ENCODE measurements at regions of chr1 and their contacts with region 1.

Region 1: GRCh38 chr1:23787701-23788100 is 3.2 kb upstream of the LYPLA2 start:
- DNase-seq: no peak
- ATAC-seq: no peak
- H3K4me3 ChIP-seq: no peak overlapping the region
- H3K27ac ChIP-seq: no peak overlapping the region
- H3K4me1 ChIP-seq: peaks cover 14% of the 10 kb centered on the region
- H3K27me3 ChIP-seq: no peaks in the 10 kb centered on the region
- CTCF ChIP-seq: no peak
- POLR2A ChIP-seq: no peak
- RAD21 ChIP-seq: no peak

Region 2: DNA sequence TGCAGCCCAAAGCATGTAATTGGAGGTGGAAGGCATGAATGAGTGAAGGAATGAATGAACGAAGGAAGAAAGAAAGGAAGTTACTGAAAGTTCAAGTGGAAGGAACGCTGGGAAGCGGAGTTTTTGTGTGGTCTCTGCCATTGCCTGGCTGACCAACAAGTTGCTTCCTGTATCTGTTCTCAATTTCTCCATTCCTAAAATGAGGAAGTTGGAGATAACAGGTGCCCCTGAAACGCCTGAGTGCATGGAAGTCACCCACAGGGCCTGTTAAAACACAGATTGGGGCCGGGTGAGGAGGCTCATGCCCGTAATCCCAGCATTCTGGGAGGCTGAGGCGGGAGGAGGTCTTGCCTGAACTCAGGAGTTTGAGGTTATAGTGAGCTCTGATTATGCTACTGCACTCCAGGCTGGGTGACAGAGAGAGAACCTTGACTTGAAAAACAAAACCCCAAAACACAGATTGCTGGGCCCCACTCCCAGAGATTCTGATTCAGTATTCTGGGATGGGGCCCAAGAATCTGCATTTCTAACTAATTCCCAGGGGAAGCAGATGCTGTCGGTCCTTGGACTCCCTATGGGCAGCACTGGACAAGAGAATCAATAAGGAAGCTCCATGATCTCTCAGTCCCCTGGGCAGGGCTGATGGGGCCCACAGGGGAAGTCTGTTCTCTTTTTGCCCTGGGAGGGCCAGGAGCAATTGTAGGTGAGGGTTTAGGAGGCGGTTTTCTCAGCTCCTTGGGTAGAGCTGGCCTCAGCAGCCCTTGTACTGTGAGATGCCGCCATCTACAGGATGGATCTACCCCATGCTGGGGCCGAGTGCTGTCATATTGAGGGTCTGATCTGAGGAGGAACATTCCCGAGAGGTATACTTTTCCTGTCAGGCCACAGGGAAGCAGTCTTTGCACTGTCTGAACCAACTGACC is 128.8 kb after region 1 on chr1:
- CTCF ChIA-PET with region 1: no interaction called
- POLR2A ChIA-PET with region 1: interaction called, 10 read pairs
- dilution Hi-C with region 1: no loop called
- in situ Hi-C with region 1: no loop called
- intact Hi-C with region 1: no loop called
- DNase-seq: peak; percentile 58
- ATAC-seq: peak; percentile 96
- H3K4me3 ChIP-seq: no peak overlapping the region
- H3K27ac ChIP-seq: no peak overlapping the region
- H3K4me1 ChIP-seq: peaks cover 2% of the 10 kb centered on the region; the same call in 1 of the 2 replicates
- H3K27me3 ChIP-seq: peaks cover 5% of the 10 kb centered on the region
- CTCF ChIP-seq: peak; percentile 67
- POLR2A ChIP-seq: no peak
- RAD21 ChIP-seq: peak; percentile 75

Region 3: DNA sequence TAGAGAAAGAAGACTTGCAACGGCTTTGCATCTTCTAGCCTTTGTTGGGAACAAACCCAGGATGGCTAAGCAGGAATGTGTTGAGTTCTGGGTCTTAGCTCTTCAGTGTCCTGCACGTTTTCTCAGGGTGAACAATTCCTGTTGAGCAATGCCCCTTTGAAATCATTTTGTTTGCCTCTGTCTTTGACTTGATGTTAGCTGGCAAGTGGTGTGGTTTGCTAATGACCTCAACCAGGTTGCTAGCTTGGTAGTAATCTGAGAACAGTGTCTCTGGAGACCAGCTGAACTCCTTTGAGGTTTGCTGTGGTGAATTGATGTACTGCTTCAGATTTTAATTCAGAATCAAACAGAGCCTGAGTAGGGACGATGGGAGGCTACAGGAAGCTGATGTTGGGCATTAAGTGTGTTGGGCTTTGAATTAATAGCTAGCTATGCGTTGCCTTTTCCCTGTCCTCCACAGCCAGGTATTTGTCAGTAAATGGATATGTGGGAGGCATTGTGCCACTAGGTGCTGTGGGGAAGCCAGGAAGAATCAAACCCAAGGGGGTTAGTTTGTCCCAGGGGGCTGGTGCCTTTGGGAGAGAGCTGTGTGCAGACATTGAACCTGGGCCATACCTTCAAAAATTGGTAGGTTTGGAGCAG is 215.8 kb after region 1 on chr1:
- CTCF ChIA-PET with region 1: no interaction called
- POLR2A ChIA-PET with region 1: no interaction called
- dilution Hi-C with region 1: no loop called
- in situ Hi-C with region 1: no loop called
- intact Hi-C with region 1: no loop called
- DNase-seq: peak; percentile 84
- ATAC-seq: peak; percentile 54
- H3K4me3 ChIP-seq: no peak overlapping the region
- H3K27ac ChIP-seq: no peak overlapping the region
- H3K4me1 ChIP-seq: peaks cover 7% of the 10 kb centered on the region
- H3K27me3 ChIP-seq: no peaks in the 10 kb centered on the region
- CTCF ChIP-seq: no peak
- POLR2A ChIP-seq: no peak
- RAD21 ChIP-seq: no peak